ENCODE measurements at regions of chr1 and their contacts with region 1.

Region 1: DNA sequence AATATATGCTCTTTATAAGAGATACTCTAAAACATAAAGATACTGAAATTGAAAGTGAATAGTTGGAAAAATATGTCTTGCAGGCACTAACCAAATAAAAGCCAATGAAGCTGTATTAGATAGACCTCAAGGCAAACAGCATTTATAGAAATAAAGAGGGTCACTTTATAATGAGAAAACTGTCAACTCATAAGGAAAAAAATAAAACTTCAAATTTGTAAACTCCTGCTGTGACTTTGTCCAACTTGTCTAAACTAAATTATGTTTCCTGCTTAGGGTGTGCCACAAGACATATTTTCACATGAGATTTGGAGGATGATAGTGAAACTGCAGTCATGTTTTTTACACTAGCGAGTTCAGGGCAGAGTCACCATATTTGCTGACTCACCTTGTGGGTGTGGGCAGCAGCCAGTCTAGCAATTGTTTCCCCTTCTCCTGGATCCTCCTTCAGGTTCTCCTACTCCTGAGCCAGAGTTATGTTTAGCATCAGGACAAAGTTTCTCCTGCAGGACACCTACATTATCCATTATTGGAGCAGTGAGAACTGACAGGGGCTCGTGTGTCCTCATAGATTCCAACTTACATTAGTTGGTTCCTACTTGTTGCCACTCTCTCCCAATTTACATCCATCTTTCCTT is 43.8 kb downstream of the CD53 start:
- DNase-seq: peak; percentile 64 to 88
- H3K4me3 ChIP-seq: peak overlapping the region; percentile 39; the same call in 1 of the 2 replicates
- H3K27ac ChIP-seq: peak overlapping the region; percentile 79
- H3K4me1 ChIP-seq: peaks cover 20% of the 10 kb centered on the region
- H3K27me3 ChIP-seq: no peaks in the 10 kb centered on the region
- CTCF ChIP-seq: no peak

Region 2: DNA sequence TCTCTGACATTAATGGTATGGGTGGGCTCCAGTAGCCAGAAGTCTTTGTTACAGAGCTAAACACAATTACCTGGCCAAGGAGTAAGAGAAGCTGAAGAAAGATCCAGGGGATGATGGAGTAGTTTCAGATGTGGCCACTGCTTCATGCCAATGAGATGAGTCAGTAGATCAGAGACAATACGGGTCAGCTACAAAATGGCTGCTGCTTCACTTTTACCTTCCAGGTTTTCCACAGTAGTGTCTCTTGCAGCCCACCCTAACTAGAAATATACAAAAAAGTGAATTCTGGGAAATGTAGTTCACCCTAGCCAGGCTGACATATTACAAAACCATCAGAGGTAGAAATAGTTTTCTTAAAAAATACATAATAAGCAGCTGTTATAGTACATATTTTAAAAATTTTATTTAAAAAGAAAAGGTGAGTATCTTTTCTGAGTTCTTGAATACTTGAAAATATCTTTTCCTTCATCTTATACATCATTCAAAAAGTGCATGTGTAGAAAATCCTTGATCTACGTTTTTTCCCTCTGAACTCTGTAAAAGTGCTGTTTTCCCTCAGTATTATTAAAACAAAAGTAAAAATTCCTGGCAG is 10.8 kb after region 1 on chr1:
- CTCF ChIA-PET with region 1: no interaction called
- POLR2A ChIA-PET with region 1: no interaction called
- intact Hi-C with region 1: loop called (anchors 1 kb)
- DNase-seq: peak in 1 of 2 experiments; percentile 18
- H3K4me3 ChIP-seq: no peak overlapping the region
- H3K27ac ChIP-seq: no peak overlapping the region
- H3K4me1 ChIP-seq: no peaks in the 10 kb centered on the region
- H3K27me3 ChIP-seq: no peaks in the 10 kb centered on the region
- CTCF ChIP-seq: no peak

Region 3: DNA sequence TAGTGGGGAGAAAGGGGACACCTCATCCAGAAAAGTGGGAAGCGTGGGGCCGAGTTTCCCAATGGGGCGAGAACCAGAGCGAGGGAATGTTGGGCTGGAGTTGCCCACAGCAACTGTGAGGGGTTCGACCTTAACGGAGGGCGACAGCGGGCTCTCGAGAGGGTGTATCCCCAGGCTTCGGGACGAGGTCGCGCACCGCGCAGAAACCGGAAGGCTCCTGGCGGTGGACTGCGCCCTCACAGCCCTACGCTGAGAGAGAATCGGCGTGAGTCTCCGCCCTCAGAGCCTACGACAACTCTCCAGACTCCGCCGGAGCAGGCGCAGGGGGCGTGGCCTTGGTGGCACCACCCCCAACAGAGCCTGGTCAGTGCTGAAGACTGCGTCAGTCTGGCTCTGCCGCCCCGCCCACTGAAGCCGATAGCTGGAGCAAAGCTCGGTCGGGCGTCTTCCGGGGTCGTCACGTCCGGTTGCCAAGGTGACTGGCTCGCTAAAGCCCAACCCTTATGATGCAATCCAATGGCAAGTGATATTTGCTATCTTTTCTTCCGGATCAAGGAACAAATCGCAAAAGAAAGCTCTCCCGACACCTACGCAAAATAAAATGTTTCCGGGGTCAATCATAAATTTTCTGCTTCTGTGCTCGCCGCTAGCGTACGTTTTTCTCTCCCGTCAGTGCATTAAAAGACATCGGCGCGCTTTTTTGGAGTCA is 47.1 kb after region 1 on chr1 and contains the start of gene LRIF1:
- CTCF ChIA-PET with region 1: no interaction called
- POLR2A ChIA-PET with region 1: interaction called, 3 read pairs
- intact Hi-C with region 1: loop called (anchors 1 kb)
- DNase-seq: peak; percentile 99 to 100
- H3K4me3 ChIP-seq: peak within 1 kb of the TSS; percentile 85
- H3K27ac ChIP-seq: peak within 1 kb of the TSS; percentile 97
- H3K4me1 ChIP-seq: peaks cover 22% of the 10 kb centered on the region
- H3K27me3 ChIP-seq: no peaks in the 10 kb centered on the region
- CTCF ChIP-seq: peak; percentile 57; the same call in 1 of the 2 replicates
- total RNA-seq, gene LRIF1: 11.8 and 13.5 TPM in 2 replicates

Measured in PC-9 (cell line).